ENCODE measurements at regions of chr20 and their contacts with region 1.

Region 1: GRCh38 chr20:37990571-37991151 is 42.6 kb downstream of the TTI1 start:
- DNase-seq: peak; percentile 64
- ATAC-seq: peak; percentile 36 to 80 (median 54)
- H3K4me3 ChIP-seq: no peak overlapping the region
- H3K27ac ChIP-seq: peak overlapping the region; percentile 61 to 88 (median 80)
- H3K4me1 ChIP-seq: peaks cover 44 to 88% (median 65%) of the 10 kb centered on the region in 9 donors
- H3K27me3 ChIP-seq: no peaks in the 10 kb centered on the region
- CTCF ChIP-seq: no peak

Region 2: GRCh38 chr20:37564388-37565133 is 426.1 kb before region 1 on chr20:
- intact Hi-C with region 1: loop called in 9 of 10 experiments (anchors 5 to 10 kb)
- DNase-seq: peak; percentile 16 to 49
- ATAC-seq: peak in 7 of 8 donors; percentile 50 to 81 (median 72)
- H3K4me3 ChIP-seq: no peak overlapping the region
- H3K27ac ChIP-seq: no peak overlapping the region
- H3K4me1 ChIP-seq: peaks cover 0 to 7% (median 5%) of the 10 kb centered on the region in 9 donors
- H3K27me3 ChIP-seq: peaks cover 0 to 83% (median 61%) of the 10 kb centered on the region in 7 donors
- CTCF ChIP-seq: peak; percentile 83 to 95 (median 91)

Region 3: DNA sequence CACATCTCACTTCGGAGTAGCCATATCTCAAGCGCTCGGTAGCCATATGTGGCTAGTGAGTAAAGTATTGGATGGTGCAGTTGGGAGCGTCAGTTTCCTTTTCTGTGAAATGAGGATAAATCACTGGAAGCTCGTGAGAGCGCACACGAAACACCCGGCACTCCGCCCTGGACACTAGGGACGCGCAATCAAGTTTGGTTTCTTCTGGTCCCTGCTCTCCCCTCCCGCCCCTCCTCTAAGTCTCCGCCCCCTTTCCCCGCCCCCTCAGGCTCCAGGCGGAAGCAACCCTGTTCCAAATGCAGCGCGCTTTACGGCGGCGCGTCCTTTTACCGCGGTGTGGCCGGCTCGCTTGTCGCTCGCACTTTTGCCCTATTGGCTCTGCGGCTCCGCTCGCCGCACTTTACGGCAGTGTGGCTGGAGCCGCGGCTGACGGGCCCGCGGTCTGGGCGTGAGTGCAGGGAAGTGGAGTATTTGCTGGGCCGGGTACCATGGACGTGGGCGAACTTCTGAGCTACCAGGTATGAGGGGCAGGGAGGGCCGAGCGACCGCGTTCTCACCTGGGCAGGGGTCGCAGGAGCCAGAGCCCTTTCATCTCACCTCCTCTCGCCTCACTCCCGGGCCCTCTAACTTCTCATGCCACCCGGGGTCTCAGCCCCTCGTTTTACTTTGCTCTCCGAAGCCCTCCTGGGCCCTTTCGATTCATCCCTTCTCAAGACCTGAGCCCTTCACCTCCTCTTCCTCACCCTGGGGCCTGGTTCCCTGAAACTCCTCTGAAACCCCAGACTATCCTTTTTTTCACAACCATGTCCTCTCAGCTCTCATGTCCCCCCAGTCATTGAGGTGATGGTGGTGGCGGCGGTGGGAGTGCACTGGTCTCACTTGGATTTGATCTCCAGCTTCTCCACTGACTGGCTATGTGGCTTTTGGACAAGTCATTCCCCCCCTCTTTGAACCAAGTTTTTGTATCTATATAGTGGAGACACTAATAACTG is 296.7 kb before region 1 on chr20 and contains the start of gene CTNNBL1:
- intact Hi-C with region 1: loop called in 1 of 10 experiments (anchors 10 kb)
- DNase-seq: peak; percentile 98 to 99
- ATAC-seq: peak; percentile 98 to 99 (median 99)
- H3K4me3 ChIP-seq: peak within 1 kb of the TSS; percentile 68 to 98 (median 84)
- H3K27ac ChIP-seq: peak within 1 kb of the TSS in 8 of 10 donors; percentile 46 to 87 (median 76)
- H3K4me1 ChIP-seq: peaks cover 3 to 25% (median 19%) of the 10 kb centered on the region in 9 donors
- H3K27me3 ChIP-seq: peaks cover 0 to 26% (median 0%) of the 10 kb centered on the region in 7 donors
- CTCF ChIP-seq: peak in 3 of 9 donors; percentile 8 to 28 (median 17)
- total RNA-seq, gene CTNNBL1: 43.2 to 62.2 (median 52.0) TPM

Region 4: DNA sequence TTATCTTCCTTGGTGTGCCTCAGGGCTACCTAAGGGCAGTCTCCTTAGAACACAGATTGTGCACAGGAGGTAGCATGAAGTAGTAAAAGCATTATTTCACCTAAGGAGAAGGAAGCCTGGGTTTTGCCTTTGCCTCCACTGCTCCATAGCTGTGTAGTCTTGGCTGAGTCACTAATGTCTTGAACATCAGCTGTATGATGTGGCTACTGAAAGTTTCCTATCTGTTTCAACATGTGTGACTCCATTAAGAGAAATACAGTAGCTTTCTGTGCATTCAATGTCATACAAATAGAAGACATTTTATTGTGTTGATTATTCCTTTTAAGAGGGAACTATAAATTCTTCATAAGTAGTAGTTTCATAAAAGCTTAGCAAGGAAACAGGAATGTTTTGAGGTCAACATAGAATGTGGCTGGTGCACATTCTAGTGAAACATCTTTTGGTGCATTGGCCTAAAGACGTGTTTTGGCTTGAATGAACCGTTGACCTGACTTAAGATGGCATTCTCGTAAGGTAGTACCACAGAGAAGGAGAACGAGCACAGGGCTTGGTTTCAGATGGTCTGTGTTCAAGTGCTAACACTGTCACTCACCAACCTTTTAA is 226.2 kb before region 1 on chr20:
- intact Hi-C with region 1: loop called in 7 of 10 experiments (anchors 5 to 10 kb)
- DNase-seq: no peak
- ATAC-seq: no peak
- H3K4me3 ChIP-seq: no peak overlapping the region
- H3K27ac ChIP-seq: no peak overlapping the region
- H3K4me1 ChIP-seq: no peaks in the 10 kb centered on the region
- H3K27me3 ChIP-seq: no peaks in the 10 kb centered on the region
- CTCF ChIP-seq: no peak

Region 5: DNA sequence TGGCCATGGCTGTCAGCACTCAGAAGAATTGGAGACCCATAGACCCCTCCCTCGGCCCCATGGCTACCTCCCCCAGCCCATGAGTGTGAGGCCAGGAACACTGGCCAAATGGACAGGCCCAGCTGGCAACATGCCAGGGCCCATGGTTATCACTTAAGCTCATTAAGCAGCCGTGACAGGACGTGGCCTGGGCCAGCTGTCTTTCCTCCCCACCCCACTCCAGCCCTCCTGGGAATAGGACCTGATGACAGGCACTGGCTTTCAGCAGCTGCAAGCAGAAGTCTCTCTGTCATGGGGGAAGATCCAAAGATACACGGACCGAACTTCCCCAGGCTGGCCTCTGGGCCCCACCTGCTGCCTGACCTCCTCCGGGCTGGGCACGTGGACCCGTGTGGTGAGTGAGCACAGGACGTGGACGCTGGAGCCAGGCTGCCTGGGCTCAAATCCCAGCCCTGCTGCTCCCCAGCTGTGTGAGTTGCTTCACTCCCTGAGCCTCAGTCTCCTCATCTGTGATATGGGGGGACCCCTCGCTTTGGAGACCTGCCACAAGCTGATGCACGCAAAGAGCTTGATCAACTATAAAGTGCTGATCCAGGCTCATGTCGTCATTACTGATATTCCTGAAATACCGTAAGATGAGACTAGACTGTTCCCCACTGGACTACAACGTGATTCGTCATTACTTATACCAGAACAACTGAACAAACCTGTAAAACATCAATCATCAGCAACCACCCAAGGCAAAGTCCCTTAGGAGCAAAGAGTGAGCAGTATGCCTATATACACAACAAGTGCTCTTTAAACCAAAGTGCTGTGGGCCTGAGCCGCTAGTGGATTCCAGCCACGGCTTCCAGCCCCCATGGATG is 109.7 kb before region 1 on chr20:
- intact Hi-C with region 1: loop called in 1 of 10 experiments (anchors 2 kb)
- DNase-seq: peak; percentile 85 to 86
- ATAC-seq: peak; percentile 86 to 94 (median 93)
- H3K4me3 ChIP-seq: no peak overlapping the region
- H3K27ac ChIP-seq: peak overlapping the region in 2 of 10 donors; percentile 10 to 51
- H3K4me1 ChIP-seq: peaks cover 3 to 35% (median 20%) of the 10 kb centered on the region in 9 donors
- H3K27me3 ChIP-seq: peaks cover 0 to 23% (median 12%) of the 10 kb centered on the region in 7 donors
- CTCF ChIP-seq: no peak

Region 6: DNA sequence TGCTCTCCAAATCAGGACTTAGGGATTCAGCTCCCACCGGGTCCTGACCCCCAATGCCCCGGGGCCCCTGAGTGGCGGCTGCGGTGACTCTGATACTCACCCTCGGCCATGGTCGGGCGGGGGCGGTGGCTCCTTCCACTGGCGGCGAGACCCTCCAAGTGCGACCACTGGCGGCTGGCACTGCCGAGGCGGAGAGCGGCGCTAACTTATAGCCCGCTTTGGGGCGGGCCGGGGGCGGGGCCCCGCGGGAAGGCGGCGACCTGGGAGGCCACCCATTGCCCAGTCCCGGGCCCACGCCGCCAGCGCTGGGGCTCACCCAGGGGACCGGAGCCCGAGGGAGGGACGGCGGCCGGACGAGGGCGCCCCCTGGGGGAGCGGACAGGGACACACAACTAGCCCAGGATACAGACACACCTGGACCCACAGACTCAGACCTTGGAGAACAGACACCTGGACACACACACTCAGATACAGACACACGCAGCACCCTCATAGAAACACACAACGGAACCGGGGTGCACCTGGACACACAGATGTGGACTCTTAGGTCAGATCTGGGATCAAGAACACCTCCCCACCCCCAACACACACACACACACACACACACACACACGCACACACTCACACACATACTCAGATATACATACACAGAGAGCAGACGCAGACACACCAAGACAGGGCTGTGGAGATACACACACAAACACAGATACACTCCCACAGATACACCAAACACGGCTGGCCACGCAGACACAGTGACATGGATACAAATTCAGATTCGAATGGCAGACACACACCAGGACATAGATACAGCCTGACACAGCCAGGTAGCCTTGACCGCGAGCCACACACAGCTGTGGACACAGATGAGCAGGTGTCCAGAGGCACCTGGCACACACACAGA is 174.7 kb after region 1 on chr20 and contains the start of gene TGM2:
- intact Hi-C with region 1: loop called in 1 of 10 experiments (anchors 5 kb)
- DNase-seq: peak; percentile 83 to 88
- ATAC-seq: peak; percentile 83 to 93 (median 92)
- H3K4me3 ChIP-seq: peak within 1 kb of the TSS; percentile 47 to 80 (median 68)
- H3K27ac ChIP-seq: peak within 1 kb of the TSS; percentile 71 to 96 (median 90)
- H3K4me1 ChIP-seq: peaks cover 24 to 81% (median 51%) of the 10 kb centered on the region in 9 donors
- H3K27me3 ChIP-seq: no peaks in the 10 kb centered on the region
- CTCF ChIP-seq: peak; percentile 84 to 94 (median 89)
- total RNA-seq, gene TGM2: 279 to 993 (median 472) TPM